WTC11 (cell line): ENCODE measurements at regions of chr12 and their contacts with region 1.

Region 1: GRCh38 chr12:26832822-26833742 is at the start of gene ITPR2:
- DNase-seq: peak; percentile 93
- ATAC-seq: peak; percentile 88
- H3K4me3 Mint-ChIP-seq: peak within 1 kb of the TSS; percentile 91
- H3K27ac Mint-ChIP-seq: peak within 1 kb of the TSS; percentile 90
- H3K4me1 Mint-ChIP-seq: peaks cover 37% of the 10 kb centered on the region
- H3K27me3 Mint-ChIP-seq: no peaks in the 10 kb centered on the region; the same call in 1 of the 2 replicates
- CTCF ChIP-seq: no peak
- total RNA-seq, gene ITPR2: 32.2 to 50.7 TPM (median 34.2 TPM) in 3 replicates

Region 2: DNA sequence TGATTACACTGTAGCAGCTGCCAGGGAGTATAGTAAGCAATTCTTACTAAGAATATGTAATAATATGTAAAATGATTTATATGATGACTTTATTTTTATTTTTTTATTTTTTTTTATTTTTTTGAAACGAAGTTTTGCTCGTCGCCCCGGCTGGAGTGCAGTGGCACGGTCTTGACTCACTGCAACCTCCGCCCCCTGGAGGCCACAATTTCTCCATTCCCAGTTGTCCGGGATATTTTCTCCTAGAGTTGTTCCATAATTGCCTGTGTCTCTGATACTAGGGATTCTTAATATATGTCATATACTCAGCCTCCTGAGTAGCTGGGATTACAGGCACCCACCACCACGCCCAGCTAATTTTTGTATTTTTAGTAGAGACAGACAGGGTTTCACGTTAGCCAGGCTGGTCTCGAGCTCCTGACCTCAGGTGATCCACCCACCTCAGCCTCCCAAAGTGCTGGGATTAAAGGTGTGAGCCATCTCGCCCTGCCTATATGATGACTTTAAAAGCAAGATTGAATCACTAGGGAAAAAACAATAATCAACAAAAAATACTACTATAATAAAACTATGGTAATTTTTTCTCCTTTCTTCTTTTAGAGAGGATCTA is 12.1 kb after region 1 on chr12:
- CTCF ChIA-PET with region 1: interaction called, 18 read pairs
- POLR2A ChIA-PET with region 1: interaction called, 3 read pairs
- DNase-seq: peak; percentile 67
- ATAC-seq: peak; percentile 85
- H3K4me3 Mint-ChIP-seq: no peak overlapping the region
- H3K27ac Mint-ChIP-seq: no peak overlapping the region
- H3K4me1 Mint-ChIP-seq: no peaks in the 10 kb centered on the region
- H3K27me3 Mint-ChIP-seq: no peaks in the 10 kb centered on the region; the same call in 1 of the 2 replicates
- CTCF ChIP-seq: peak; percentile 49